Right ventricle myocardium superior (tissue), 1 donor: ENCODE measurements at regions of chr18 and their contacts with region 1.

Region 1: DNA sequence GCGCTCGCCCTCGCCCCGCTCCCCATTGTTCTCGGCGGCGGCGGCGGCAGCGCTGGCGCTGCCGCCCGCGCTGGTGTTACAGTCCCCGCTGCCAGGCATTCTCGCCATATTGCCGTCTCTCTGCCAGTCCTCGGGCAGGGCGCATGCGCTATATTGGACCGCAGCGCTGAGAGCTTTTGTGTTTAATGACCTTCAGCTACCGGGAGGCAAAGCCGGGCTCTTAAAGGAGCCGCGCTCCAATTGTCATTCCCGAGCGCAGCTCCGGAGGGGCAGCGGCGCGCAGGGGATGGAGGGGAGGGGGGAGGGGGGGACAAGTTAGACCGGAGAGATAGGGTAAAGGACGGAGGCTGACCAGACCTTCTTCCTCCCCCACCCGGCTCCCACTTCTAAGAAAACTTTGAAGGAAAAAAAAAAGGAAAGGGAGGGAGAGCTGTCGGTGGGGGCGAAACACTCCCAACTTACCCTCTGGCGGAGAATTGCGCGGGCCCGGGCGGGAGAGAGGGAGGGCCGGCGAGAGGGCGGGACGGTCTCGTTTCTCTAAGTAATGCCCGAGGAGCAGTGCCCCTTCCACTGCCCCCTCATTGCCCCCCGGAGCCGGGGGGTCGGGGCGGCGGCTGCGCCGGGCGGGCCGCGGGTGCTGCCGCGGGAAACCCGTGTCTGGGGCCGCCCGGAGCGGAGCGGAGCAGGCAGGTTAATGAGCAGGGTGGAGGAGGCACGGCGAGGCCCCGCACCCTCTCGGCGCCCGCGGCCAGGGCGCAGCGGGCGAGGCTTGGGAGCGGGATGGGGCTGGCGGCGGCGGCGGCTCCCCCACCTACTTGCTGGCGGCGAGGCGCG is at the start of gene KCTD1:
- DNase-seq: peak; percentile 90
- ATAC-seq: peak; percentile 68
- total RNA-seq, gene KCTD1: 16.1 TPM

Region 2: GRCh38 chr18:26383454-26384270 is 165.0 kb before region 1 on chr18:
- intact Hi-C with region 1: loop called (anchors 10 kb)
- DNase-seq: no peak
- ATAC-seq: peak; percentile 68

Region 3: GRCh38 chr18:26460449-26461091 is 88.1 kb before region 1 on chr18:
- intact Hi-C with region 1: loop called (anchors 5 kb)
- DNase-seq: peak; percentile 68
- ATAC-seq: peak; percentile 91